IMR-90 (cell line): ENCODE measurements at regions of chr5 and their contacts with region 1.

Region 1: GRCh38 chr5:36264202-36264760 is 22.6 kb upstream of the NADK2 start:
- DNase-seq: no peak
- ATAC-seq: no peak
- H3K4me3 ChIP-seq: no peak overlapping the region
- H3K27ac ChIP-seq: no peak overlapping the region
- H3K4me1 ChIP-seq: no peaks in the 10 kb centered on the region
- H3K27me3 ChIP-seq: peaks cover 1% of the 10 kb centered on the region; the same call in 1 of the 2 replicates
- CTCF ChIP-seq: no peak
- POLR2A ChIP-seq: no peak
- RAD21 ChIP-seq: no peak

Region 2: GRCh38 chr5:36066001-36066539 is 198.2 kb before region 1 on chr5:
- CTCF ChIA-PET with region 1: interaction called, 11 read pairs
- POLR2A ChIA-PET with region 1: no interaction called
- dilution Hi-C with region 1: no loop called
- in situ Hi-C with region 1: no loop called
- intact Hi-C with region 1: no loop called
- DNase-seq: no peak
- ATAC-seq: no peak
- H3K4me3 ChIP-seq: no peak overlapping the region
- H3K27ac ChIP-seq: no peak overlapping the region
- H3K4me1 ChIP-seq: no peaks in the 10 kb centered on the region
- H3K27me3 ChIP-seq: peaks cover 16% of the 10 kb centered on the region
- CTCF ChIP-seq: no peak
- POLR2A ChIP-seq: no peak
- RAD21 ChIP-seq: no peak

Region 3: GRCh38 chr5:36389245-36389644 is 125.0 kb after region 1 on chr5:
- CTCF ChIA-PET with region 1: no interaction called
- POLR2A ChIA-PET with region 1: no interaction called
- dilution Hi-C with region 1: no loop called
- in situ Hi-C with region 1: no loop called
- intact Hi-C with region 1: no loop called
- DNase-seq: no peak
- ATAC-seq: no peak
- H3K4me3 ChIP-seq: no peak overlapping the region
- H3K27ac ChIP-seq: no peak overlapping the region
- H3K4me1 ChIP-seq: no peaks in the 10 kb centered on the region
- H3K27me3 ChIP-seq: peaks cover 17% of the 10 kb centered on the region
- CTCF ChIP-seq: no peak
- POLR2A ChIP-seq: no peak
- RAD21 ChIP-seq: no peak

Region 4: GRCh38 chr5:36584009-36584875 is 320.0 kb after region 1 on chr5:
- CTCF ChIA-PET with region 1: no interaction called
- POLR2A ChIA-PET with region 1: no interaction called
- dilution Hi-C with region 1: no loop called
- in situ Hi-C with region 1: no loop called
- intact Hi-C with region 1: no loop called
- DNase-seq: no peak
- ATAC-seq: no peak
- H3K4me3 ChIP-seq: no peak overlapping the region
- H3K27ac ChIP-seq: no peak overlapping the region
- H3K4me1 ChIP-seq: no peaks in the 10 kb centered on the region
- H3K27me3 ChIP-seq: peaks cover 13% of the 10 kb centered on the region
- CTCF ChIP-seq: no peak
- POLR2A ChIP-seq: no peak
- RAD21 ChIP-seq: no peak